Natural killer cell (primary cell): ENCODE measurements at regions of chr5 and their contacts with region 1.

Region 1: DNA sequence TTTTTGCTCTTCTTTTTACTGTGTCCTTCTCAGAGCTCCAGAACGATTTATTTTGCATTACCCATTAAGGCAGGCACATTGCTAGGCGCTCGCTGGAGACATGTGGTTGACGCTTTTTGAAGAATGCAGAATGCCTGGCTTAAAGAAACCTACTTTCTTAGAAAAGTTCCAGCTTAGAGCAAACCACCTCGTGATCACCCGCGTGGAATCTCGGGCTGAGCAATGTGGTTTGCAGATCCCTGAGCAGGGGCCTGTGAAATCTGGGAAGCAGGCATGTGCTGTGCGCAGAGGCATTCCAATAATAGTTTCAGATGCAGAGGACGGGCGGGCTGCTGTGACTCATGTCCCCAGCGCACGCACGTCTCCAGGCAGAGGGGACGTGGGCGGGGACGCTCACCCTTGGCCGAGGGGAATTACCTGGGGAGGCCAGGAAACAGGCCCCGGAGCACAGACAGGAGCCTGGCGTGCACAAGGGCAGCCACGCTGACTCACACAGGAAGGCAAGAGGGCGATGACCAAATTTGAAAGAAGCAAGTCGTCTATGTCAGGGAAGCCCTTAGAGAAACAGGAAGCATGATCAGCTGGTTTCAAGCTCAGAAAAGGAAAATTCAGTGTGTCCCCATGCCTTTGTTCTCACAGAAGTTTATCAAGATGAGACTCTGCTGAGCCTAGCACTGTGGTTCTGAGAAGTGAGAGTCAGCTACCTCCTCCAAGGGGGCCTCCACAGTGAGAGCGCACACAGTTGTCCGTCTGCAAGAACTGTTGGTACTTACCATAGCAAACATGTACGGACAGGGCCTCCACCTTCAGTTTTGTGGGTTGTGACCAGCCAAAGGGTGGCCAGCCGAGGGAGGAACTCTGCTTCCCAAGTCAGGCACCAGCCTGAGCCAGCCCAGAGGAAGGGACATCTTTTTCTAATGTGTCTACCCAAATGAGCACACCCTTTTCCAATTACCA is 218.6 kb downstream of the PIK3R1 start:
- DNase-seq: peak; percentile 79 to 93
- ATAC-seq: peak; percentile 93 to 95 (median 95)
- H3K4me3 ChIP-seq: no peak overlapping the region
- H3K4me3 Mint-ChIP-seq: peak overlapping the region; percentile 72
- H3K27ac ChIP-seq: peak overlapping the region; percentile 80
- H3K27ac Mint-ChIP-seq: peak overlapping the region; percentile 92 to 97
- H3K4me1 ChIP-seq: peaks cover 25% of the 10 kb centered on the region
- H3K4me1 Mint-ChIP-seq: peaks cover 34 to 36% of the 10 kb centered on the region in 2 donors
- H3K27me3 ChIP-seq: no peaks in the 10 kb centered on the region
- H3K27me3 Mint-ChIP-seq: no peaks in the 10 kb centered on the region
- CTCF ChIP-seq: no peak

Region 2: GRCh38 chr5:68343421-68343826 is 90.8 kb before region 1 on chr5:
- intact Hi-C with region 1: loop called (anchors 2 kb)
- DNase-seq: peak in 1 of 2 donors; percentile 14
- ATAC-seq: peak in 2 of 3 donors; percentile 24 to 28
- H3K4me3 ChIP-seq: no peak overlapping the region
- H3K4me3 Mint-ChIP-seq: no peak overlapping the region
- H3K27ac ChIP-seq: no peak overlapping the region
- H3K27ac Mint-ChIP-seq: peak overlapping the region in 1 of 2 donors; percentile 79
- H3K4me1 ChIP-seq: peaks cover 24% of the 10 kb centered on the region
- H3K4me1 Mint-ChIP-seq: peaks cover 31 to 36% of the 10 kb centered on the region in 2 donors
- H3K27me3 ChIP-seq: no peaks in the 10 kb centered on the region
- H3K27me3 Mint-ChIP-seq: no peaks in the 10 kb centered on the region
- CTCF ChIP-seq: no peak

Region 3: GRCh38 chr5:68369457-68370125 is 64.6 kb before region 1 on chr5:
- intact Hi-C with region 1: loop called (anchors 5 kb)
- DNase-seq: peak in 1 of 2 donors; percentile 73
- ATAC-seq: peak; percentile 93 to 99 (median 98)
- H3K4me3 ChIP-seq: peak overlapping the region; percentile 6
- H3K4me3 Mint-ChIP-seq: peak overlapping the region; percentile 74
- H3K27ac ChIP-seq: peak overlapping the region; percentile 64
- H3K27ac Mint-ChIP-seq: peak overlapping the region; percentile 84 to 88
- H3K4me1 ChIP-seq: peaks cover 15% of the 10 kb centered on the region
- H3K4me1 Mint-ChIP-seq: peaks cover 37 to 40% of the 10 kb centered on the region in 2 donors
- H3K27me3 ChIP-seq: no peaks in the 10 kb centered on the region
- H3K27me3 Mint-ChIP-seq: no peaks in the 10 kb centered on the region
- CTCF ChIP-seq: no peak

Region 4: DNA sequence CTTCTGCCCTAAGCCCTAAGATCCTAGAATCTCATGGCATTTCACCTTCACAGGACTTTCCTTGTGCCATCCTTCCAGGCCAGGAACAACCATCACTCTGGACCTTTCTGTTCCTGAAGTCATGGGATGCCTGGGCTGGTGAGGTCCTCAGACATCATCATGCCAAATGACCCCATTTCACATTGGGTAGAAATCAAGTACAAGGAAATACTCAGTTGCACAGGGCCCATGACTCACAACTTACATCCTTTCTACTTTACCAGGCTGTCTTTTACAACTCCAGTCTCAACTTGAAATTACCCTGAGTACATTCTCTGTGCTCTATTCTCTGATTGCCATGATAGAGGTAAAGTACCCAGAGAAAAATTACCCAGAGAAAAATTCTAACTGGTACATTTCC is 51.6 kb before region 1 on chr5:
- intact Hi-C with region 1: no loop called
- DNase-seq: peak in 1 of 2 donors; percentile 9
- ATAC-seq: peak; percentile 50 to 71 (median 59)
- H3K4me3 ChIP-seq: no peak overlapping the region
- H3K4me3 Mint-ChIP-seq: peak overlapping the region; percentile 70
- H3K27ac ChIP-seq: peak overlapping the region; percentile 57
- H3K27ac Mint-ChIP-seq: peak overlapping the region; percentile 88 to 91
- H3K4me1 ChIP-seq: peaks cover 39% of the 10 kb centered on the region
- H3K4me1 Mint-ChIP-seq: peaks cover 76 to 85% of the 10 kb centered on the region in 2 donors
- H3K27me3 ChIP-seq: no peaks in the 10 kb centered on the region
- H3K27me3 Mint-ChIP-seq: no peaks in the 10 kb centered on the region
- CTCF ChIP-seq: no peak